BJ (cell line): ENCODE measurements at regions of chr7 and their contacts with region 1.

Region 1: DNA sequence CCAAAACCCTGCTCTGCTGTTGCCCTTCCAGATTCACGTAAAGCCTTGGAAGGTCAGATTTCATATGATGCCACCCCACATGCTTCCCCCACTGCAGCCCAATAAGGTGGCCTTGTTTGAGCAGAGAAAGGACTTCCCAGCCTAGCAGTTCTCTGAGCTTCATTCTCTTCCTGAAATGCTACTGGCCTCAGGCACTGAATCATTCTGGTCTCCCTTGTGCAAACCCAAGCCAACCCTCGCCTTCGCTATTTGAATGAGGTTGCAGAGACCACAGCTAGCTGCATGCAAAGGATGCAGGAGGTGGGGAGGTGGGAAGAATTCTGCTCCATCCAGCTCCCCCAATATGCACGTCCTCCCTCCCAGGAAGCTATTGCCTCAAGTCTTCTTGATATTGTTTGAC is 60.3 kb upstream of the PLXNA4 start:
- DNase-seq: no peak
- H3K4me3 ChIP-seq: no peak overlapping the region
- H3K27me3 ChIP-seq: peaks cover 1% of the 10 kb centered on the region; the same call in 1 of the 2 replicates
- CTCF ChIP-seq: no peak

Region 2: GRCh38 chr7:132696332-132696731 is 59.7 kb after region 1 on chr7:
- CTCF ChIA-PET with region 1: no interaction called
- POLR2A ChIA-PET with region 1: interaction called, 14 read pairs
- DNase-seq: no peak
- H3K4me3 ChIP-seq: no peak overlapping the region
- H3K27me3 ChIP-seq: peaks cover 2% of the 10 kb centered on the region; the same call in 1 of the 2 replicates
- CTCF ChIP-seq: no peak

Region 3: DNA sequence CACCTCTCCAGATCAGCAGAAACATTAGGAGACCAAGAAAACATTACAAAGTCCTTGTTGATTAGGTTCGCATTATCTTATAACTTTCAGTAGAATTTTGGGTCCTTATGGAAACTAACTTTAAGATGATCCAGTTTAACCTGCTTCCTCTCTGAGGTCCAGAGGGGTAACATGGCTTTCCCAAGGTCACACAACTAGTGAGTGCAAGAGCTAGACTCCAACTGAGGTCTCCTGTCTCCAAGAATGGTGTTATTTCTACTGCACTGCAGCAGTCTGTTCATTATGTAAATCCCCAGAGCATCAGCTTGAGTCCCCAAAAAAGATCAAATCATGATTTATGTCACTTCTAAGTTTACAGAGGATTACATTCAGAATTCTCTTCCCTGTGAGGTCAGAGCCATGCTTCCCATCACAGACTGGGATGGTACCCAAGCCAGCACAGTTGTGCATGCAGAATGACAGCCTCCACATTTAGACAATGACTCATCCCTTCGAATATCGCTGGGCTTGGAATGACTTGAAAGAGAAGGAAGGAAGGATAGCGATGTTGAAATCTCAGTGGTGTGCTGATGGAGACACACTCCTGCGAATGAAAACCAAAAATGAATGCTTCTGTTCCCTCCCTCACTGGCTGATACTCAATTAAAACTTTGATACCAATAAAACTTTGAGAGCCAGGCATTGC is 102.8 kb after region 1 on chr7:
- CTCF ChIA-PET with region 1: no interaction called
- POLR2A ChIA-PET with region 1: no interaction called
- DNase-seq: peak; percentile 66
- H3K4me3 ChIP-seq: no peak overlapping the region
- H3K27me3 ChIP-seq: no peaks in the 10 kb centered on the region
- CTCF ChIP-seq: no peak